Sigmoid colon (tissue), 7 donors: ENCODE measurements at regions of chr19 and their contacts with region 1.

Region 1: DNA sequence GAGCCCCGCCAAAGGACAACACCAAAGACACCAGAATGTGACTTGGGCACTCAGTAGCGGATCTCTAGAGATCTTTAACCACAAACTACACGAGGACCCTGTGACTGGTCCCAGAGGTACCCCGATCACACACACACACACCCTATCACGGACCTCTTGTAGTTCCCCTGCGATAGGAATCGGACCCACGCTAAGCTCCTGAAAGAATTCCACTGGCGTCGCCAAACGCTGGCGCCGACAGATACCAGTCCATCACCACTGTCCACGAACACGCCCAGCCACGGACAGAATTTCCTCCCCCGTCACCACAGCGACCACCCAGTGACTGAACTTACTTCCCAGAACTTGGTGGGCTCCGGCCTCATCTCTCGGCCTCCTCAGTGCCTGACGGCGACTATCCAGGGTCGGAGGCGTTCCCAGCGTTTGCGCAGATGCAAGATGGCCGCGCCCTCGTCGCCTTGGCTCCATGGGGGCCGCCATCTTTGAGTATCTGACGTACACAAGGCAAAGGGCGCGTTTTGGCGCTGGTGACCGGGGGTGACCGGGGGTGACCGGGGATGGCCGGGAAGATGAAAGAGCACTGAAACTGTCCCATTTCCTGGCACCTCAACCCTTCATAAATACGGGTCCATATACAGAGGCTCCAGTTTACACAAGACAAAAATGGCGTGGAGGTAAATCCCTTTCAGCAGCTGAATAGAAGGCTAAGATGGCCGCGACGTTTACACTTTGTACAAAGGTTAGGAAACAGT is at the start of gene ZNF615:
- DNase-seq: peak; percentile 93
- H3K4me3 ChIP-seq: peak within 1 kb of the TSS; percentile 63 to 83 (median 75)
- H3K27ac ChIP-seq: peak within 1 kb of the TSS; percentile 81 to 91 (median 86)
- H3K4me1 ChIP-seq: peaks cover 0 to 11% (median 8%) of the 10 kb centered on the region in 4 donors
- H3K27me3 ChIP-seq: no peaks in the 10 kb centered on the region
- CTCF ChIP-seq: no peak
- EP300 ChIP-seq: no peak
- POLR2A ChIP-seq: peak in 1 of 2 donors; percentile 35
- total RNA-seq, gene ZNF615: 18.0 to 26.8 (median 22.5) TPM

Region 2: DNA sequence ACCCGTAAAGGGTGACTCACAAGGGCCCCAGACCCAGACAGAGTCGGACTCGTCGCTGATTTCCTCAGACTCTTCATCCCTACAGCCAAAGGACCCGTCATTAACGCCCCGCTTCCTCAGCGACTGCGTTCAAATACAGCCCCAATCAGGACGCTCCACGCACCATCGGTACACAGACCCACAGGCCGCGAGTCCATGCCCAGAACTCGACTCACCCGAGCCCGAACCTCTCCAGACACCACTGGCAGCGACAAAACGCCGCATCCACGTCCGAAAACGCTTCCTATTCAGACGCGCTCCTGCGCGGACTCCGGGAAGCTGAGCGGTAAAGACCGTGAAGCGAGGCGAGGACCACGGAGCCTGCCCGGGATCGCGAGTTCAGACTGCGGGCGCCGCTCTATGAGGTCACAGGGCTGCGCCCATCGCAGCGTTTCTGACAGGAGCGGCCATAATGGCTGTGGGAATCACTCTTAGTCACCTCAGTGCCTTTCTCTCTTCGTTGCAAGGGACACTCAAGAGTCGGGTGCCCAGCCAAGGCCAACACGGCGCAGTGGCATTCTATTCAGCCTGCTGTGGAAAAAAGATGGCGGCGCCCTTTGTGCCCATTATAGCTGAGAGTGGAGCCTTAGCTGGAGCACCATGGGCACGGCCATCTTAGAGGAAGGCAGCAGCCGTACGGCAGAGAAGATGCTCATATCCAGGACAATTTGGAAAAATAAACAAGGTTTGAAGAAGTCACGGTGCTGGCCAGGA is 20.2 kb after region 1 on chr19 and contains the start of gene ZNF614:
- intact Hi-C with region 1: loop called (anchors 1 kb)
- DNase-seq: peak; percentile 90
- H3K4me3 ChIP-seq: peak within 1 kb of the TSS; percentile 57 to 87 (median 71)
- H3K27ac ChIP-seq: peak within 1 kb of the TSS; percentile 90 to 94 (median 92)
- H3K4me1 ChIP-seq: peaks cover 0 to 23% (median 14%) of the 10 kb centered on the region in 4 donors
- H3K27me3 ChIP-seq: no peaks in the 10 kb centered on the region
- CTCF ChIP-seq: no peak
- EP300 ChIP-seq: no peak
- POLR2A ChIP-seq: peak; percentile 9 to 59
- total RNA-seq, gene ZNF614: 6.6 to 13.5 (median 10.7) TPM